K562 (cell line): ENCODE measurements at regions of chr5 and their contacts with region 1.

Region 1: DNA sequence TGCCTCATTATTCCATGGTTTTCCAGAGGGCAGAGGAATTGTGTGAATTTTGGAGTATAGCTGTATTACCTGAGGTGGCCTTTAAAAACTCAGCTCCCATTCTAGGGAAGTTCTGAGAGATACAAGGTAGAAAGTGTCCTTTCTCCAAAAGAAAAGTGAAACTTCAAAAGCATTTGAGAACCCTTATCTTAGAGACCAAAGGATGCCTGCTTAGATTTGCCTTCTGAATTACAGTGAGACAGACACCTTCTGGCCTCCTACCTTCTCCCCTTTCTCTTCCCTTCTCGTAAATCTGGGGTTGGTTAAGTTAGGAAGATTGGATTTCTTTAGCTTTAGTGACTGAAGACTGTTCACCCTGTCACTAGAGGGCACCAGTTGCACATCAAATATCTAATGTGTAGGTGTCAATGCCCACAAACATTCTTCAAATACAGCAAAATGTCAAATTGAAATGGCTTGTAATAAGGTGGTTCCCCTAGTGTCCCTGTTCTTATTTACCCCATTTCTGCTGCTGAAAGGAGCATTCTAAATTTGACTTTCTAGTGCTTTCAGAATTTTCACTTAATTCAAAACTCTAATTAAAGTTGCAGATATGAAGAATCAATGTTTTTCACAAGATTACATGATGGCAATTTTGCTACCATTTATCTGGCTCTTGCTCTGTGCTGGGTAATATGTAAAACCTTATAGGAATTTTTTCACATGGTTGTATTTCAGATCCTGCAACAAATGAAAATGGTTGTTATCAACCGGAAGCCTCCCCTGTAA is 46.7 kb downstream of the PRRC1 start:
- DNase-seq: peak; percentile 27 to 72 (median 38)
- ATAC-seq: peak; percentile 91
- H3K4me3 ChIP-seq: no peak overlapping the region
- H3K27ac ChIP-seq: no peak overlapping the region
- H3K4me1 ChIP-seq: no peaks in the 10 kb centered on the region; a peak in 1 of 5 replicates
- H3K27me3 ChIP-seq: peaks cover 0 to 8% of the 10 kb centered on the region in 2 experiments; a peak in 2 of 5 replicates
- CTCF ChIP-seq: peak; percentile 53 to 77 (median 73); a peak in 5 of 6 replicates
- EP300 ChIP-seq: no peak
- POLR2A ChIP-seq: no peak
- RAD21 ChIP-seq: peak; percentile 73 to 82

Region 2: DNA sequence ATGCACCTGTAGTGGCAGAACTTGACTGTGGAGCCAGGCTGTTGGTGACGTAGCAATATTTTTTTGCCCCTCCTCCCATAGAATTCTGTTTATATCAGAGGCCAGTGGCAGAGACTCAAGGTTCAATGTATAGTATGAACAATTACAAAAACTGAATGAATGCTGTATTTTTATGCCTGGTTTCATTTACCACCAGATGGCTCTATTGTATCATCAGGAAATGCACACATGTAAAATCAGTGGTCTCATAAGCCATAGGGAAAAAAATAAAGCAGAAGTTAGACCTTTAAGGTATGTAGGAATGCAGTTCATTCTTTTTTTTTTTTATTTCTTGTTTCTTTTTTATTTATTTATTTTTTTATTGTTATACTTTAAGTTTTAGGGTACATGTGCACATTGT is 182.6 kb after region 1 on chr5:
- CTCF ChIA-PET with region 1: no interaction called
- POLR2A ChIA-PET with region 1: no interaction called
- in situ Hi-C with region 1: no loop called
- intact Hi-C with region 1: loop called (anchors 5 kb)
- DNase-seq: peak in 2 of 4 experiments; percentile 18 to 21
- ATAC-seq: peak; percentile 72
- H3K4me3 ChIP-seq: no peak overlapping the region
- H3K27ac ChIP-seq: no peak overlapping the region
- H3K4me1 ChIP-seq: no peaks in the 10 kb centered on the region
- H3K27me3 ChIP-seq: no peaks in the 10 kb centered on the region; a peak in 1 of 5 replicates
- CTCF ChIP-seq: peak; percentile 28 to 62 (median 31); a peak in 4 of 6 replicates
- EP300 ChIP-seq: no peak
- POLR2A ChIP-seq: no peak
- RAD21 ChIP-seq: peak; percentile 53 to 66

Region 3: GRCh38 chr5:127875235-127876021 is 311.2 kb after region 1 on chr5:
- CTCF ChIA-PET with region 1: no interaction called
- POLR2A ChIA-PET with region 1: no interaction called
- in situ Hi-C with region 1: no loop called
- intact Hi-C with region 1: loop called (anchors 10 kb)
- DNase-seq: peak; percentile 16 to 56 (median 20)
- ATAC-seq: peak; percentile 90
- H3K4me3 ChIP-seq: no peak overlapping the region
- H3K27ac ChIP-seq: no peak overlapping the region
- H3K4me1 ChIP-seq: no peaks in the 10 kb centered on the region
- H3K27me3 ChIP-seq: peaks cover 0 to 4% of the 10 kb centered on the region in 2 experiments; a peak in 1 of 5 replicates
- CTCF ChIP-seq: peak; percentile 36 to 68 (median 46); a peak in 4 of 6 replicates
- EP300 ChIP-seq: no peak
- POLR2A ChIP-seq: no peak
- RAD21 ChIP-seq: peak; percentile 64

Region 4: GRCh38 chr5:128083033-128083810 is 519.0 kb after region 1 on chr5 and contains the start of gene SLC12A2:
- CTCF ChIA-PET with region 1: no interaction called
- POLR2A ChIA-PET with region 1: interaction called, 3 read pairs
- in situ Hi-C with region 1: no loop called
- intact Hi-C with region 1: loop called (anchors 10 kb)
- DNase-seq: peak; percentile 81 to 94 (median 85)
- ATAC-seq: peak; percentile 82
- H3K4me3 ChIP-seq: peak within 1 kb of the TSS; percentile 80
- H3K27ac ChIP-seq: peak within 1 kb of the TSS; percentile 89
- H3K4me1 ChIP-seq: peaks cover 17 to 20% of the 10 kb centered on the region in 2 experiments; a peak in 4 of 5 replicates
- H3K27me3 ChIP-seq: no peaks in the 10 kb centered on the region
- CTCF ChIP-seq: peak in 1 of 3 experiments; percentile 13; a peak in 1 of 6 replicates
- EP300 ChIP-seq: no peak
- POLR2A ChIP-seq: peak; percentile 84
- RAD21 ChIP-seq: no peak
- polyA plus RNA-seq, gene SLC12A2: 5.3 to 5.4 TPM

Region 5: GRCh38 chr5:128674825-128675446 is 1110.8 kb after region 1 on chr5:
- CTCF ChIA-PET with region 1: no interaction called
- POLR2A ChIA-PET with region 1: no interaction called
- in situ Hi-C with region 1: no loop called
- intact Hi-C with region 1: loop called (anchors 10 kb)
- DNase-seq: peak; percentile 28 to 48 (median 42)
- ATAC-seq: peak; percentile 73
- H3K4me3 ChIP-seq: no peak overlapping the region
- H3K27ac ChIP-seq: no peak overlapping the region
- H3K4me1 ChIP-seq: no peaks in the 10 kb centered on the region
- H3K27me3 ChIP-seq: no peaks in the 10 kb centered on the region
- CTCF ChIP-seq: peak; percentile 30 to 46 (median 46); a peak in 5 of 6 replicates
- EP300 ChIP-seq: no peak
- POLR2A ChIP-seq: no peak
- RAD21 ChIP-seq: peak; percentile 17 to 45; a peak in 2 of 4 replicates

Region 6: GRCh38 chr5:128844354-128844923 is 1280.3 kb after region 1 on chr5:
- CTCF ChIA-PET with region 1: no interaction called
- POLR2A ChIA-PET with region 1: no interaction called
- in situ Hi-C with region 1: no loop called
- intact Hi-C with region 1: loop called (anchors 5 kb)
- DNase-seq: no peak
- ATAC-seq: no peak
- H3K4me3 ChIP-seq: no peak overlapping the region
- H3K27ac ChIP-seq: no peak overlapping the region
- H3K4me1 ChIP-seq: no peaks in the 10 kb centered on the region
- H3K27me3 ChIP-seq: no peaks in the 10 kb centered on the region
- CTCF ChIP-seq: no peak; a peak in 1 of 6 replicates
- EP300 ChIP-seq: no peak
- POLR2A ChIP-seq: no peak
- RAD21 ChIP-seq: peak in 1 of 2 experiments; percentile 37; a peak in 2 of 4 replicates